ENCODE measurements at regions of chr19 and their contacts with region 1.

Region 1: DNA sequence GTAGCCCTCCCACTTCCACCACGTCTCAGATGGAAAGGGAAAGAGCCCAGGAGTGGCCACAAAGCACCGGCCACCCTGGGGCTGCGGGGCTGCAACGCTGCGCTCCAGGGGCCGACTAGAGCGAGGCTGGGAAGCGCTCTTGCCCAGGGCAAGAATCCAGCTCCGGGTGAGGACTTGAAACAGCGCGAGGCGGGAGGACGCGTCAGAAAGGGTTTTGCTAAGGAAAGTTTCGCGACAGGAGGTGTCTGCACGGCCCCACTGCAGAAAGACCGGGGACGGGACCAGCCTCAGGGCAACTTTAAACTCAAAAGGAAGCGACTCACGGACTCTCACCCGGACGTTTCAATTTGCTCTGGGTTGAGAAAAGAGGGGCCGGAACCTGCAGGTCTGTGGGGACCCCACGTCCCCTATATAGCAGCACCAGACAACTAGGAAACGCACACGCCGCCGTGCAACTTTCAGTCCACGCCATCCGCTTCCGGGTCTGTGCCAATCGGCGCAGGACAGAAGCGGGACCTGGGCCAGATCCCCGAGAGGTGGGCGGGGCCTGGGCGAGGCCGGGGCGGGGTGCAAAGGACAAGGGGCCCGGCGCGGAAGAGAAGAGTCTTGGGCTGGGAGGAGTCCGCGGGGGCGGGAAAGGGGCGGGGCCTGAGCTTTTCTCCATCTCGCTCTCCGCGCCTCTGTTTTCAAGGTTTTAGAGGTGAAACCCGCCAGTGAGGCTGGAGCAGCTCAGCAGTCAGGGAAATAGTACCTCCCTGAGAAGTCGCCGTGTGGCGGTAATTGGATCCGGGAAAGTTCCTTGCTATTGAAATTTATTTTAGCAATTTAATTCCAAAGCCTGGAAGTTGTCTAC is at the start of gene ZNF816:
- DNase-seq: peak; percentile 100
- H3K4me3 Mint-ChIP-seq: peak within 1 kb of the TSS; percentile 97
- H3K27ac Mint-ChIP-seq: peak within 1 kb of the TSS; percentile 95
- H3K4me1 Mint-ChIP-seq: peaks cover 15% of the 10 kb centered on the region
- H3K27me3 Mint-ChIP-seq: no peaks in the 10 kb centered on the region
- total RNA-seq, gene ZNF816: 8.9 TPM in 2 replicates

Region 2: DNA sequence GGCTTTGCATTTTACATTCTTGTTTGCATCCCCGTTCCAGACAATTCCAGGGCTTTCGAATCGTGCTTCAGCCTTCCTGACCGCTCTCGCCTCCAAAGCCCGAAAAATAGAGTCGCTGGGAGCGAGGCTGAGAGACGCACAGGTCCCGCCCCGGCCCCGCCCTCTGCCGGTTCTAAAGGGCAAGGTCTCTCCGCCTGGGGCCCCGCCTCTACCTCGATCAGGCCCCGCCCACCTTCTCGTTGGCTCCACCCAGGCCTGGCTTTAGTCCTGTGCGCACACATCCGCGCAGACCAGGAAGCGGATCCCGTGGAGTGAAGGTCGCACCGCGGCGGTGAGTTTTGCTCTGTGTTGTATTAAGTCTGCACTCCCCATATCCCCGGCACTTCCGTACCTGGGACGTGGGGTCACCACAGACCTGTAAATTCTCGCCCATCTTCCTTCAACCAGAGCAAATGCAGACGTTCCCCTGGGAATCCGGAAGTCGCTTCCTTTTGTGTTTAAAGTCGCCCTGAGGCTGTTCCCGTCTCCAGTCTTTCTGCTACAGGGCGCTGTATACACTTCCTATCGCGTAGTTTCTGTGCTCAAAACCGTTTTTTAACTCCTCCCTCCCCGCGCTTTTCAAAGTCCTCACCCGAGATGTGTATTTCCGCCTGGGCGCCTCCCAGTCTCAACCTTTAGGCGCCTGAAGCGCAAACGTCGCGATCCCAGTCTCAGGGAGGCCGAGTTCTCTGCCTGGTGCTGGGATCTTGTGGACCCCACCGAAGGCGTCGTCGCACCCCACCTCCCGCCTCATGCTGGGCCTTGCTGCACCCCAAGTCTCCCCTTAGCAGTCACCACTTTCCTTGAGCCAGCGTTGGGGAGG is 392.4 kb before region 1 on chr19 and contains the start of gene ZNF701:
- intact Hi-C with region 1: loop called (anchors 2 kb)
- DNase-seq: peak; percentile 99
- H3K4me3 Mint-ChIP-seq: peak within 1 kb of the TSS; percentile 88
- H3K27ac Mint-ChIP-seq: peak within 1 kb of the TSS; percentile 89
- H3K4me1 Mint-ChIP-seq: peaks cover 23% of the 10 kb centered on the region
- H3K27me3 Mint-ChIP-seq: no peaks in the 10 kb centered on the region
- total RNA-seq, gene ZNF701: 19.3 and 21.0 TPM in 2 replicates

Region 3: GRCh38 chr19:52786457-52787359 is 175.9 kb before region 1 on chr19 and contains the start of gene ZNF600:
- intact Hi-C with region 1: loop called (anchors 2 kb)
- DNase-seq: peak; percentile 90
- H3K4me3 Mint-ChIP-seq: peak within 1 kb of the TSS; percentile 92
- H3K27ac Mint-ChIP-seq: peak within 1 kb of the TSS; percentile 79
- H3K4me1 Mint-ChIP-seq: peaks cover 26% of the 10 kb centered on the region
- H3K27me3 Mint-ChIP-seq: no peaks in the 10 kb centered on the region
- total RNA-seq, gene ZNF600: 10.6 and 10.7 TPM in 2 replicates

Region 4: GRCh38 chr19:52853880-52854279 is 108.7 kb before region 1 on chr19:
- intact Hi-C with region 1: loop called (anchors 1 kb)
- DNase-seq: no peak
- H3K4me3 Mint-ChIP-seq: no peak overlapping the region
- H3K27ac Mint-ChIP-seq: no peak overlapping the region
- H3K4me1 Mint-ChIP-seq: peaks cover 16% of the 10 kb centered on the region
- H3K27me3 Mint-ChIP-seq: no peaks in the 10 kb centered on the region

Region 5: DNA sequence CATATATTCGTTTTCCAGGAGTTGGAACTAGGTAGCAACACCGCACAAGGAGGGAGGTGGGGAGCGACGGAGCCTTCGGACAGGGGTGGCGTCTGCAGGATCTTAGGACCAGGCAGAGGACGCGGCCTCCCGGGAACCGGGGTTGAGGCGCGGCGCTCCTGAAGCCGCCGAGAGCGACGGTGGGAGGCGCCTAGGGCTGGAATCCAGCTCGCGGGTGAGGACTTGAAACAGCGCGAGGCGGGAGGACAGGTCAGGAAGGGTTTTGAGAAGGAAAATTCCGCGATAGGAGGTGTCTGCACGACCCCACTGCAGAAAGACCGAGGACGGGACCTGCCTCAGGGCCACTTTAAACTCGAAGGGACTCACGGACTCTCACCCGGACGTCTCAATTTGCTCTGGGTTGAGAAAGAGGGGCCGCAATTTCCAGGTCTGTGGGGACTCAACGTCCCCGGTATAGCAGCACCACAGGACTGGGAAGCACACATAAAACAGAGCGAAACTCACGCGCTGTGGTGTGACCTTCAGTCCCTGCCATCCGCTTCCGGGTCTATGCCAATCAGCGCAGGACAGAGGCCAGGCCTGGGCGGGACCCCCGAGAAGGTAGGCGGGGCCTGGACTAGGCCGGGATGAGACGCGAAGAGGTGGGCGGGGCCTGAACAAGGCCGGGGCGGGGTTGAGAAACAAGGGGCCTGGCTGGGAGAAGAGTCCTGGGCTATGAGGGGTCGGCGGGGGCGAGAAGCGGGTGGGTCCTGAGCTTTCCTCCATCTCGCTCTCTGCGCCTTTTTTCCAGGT is 65.3 kb before region 1 on chr19 and contains the start of gene ZNF320:
- intact Hi-C with region 1: loop called (anchors 1 kb)
- DNase-seq: peak; percentile 98
- H3K4me3 Mint-ChIP-seq: peak within 1 kb of the TSS; percentile 92
- H3K27ac Mint-ChIP-seq: peak within 1 kb of the TSS; percentile 93
- H3K4me1 Mint-ChIP-seq: peaks cover 7% of the 10 kb centered on the region
- H3K27me3 Mint-ChIP-seq: no peaks in the 10 kb centered on the region
- total RNA-seq, gene ZNF320: 8.0 and 17.8 TPM in 2 replicates

Region 6: DNA sequence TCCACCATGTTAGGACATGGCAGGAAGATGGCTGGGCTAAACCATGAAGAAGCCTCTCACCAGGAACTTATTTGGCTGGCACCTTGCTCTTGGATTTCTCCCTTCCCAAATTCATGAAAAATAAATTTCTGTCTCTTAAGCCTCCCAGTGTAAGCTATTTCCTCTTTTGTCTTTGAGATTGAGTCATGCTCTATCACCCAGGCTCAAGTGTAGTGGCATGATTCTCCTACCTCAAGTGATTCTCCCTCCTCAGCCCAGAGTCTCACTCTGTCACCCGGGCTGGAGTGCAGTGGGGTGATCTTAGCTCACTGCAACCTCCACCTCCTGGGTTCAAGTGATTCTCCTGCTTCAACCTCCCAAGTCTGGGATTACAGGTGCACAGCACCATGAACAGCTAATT is 52.0 kb before region 1 on chr19:
- intact Hi-C with region 1: no loop called
- DNase-seq: no peak
- H3K4me3 Mint-ChIP-seq: no peak overlapping the region
- H3K27ac Mint-ChIP-seq: no peak overlapping the region
- H3K4me1 Mint-ChIP-seq: no peaks in the 10 kb centered on the region
- H3K27me3 Mint-ChIP-seq: no peaks in the 10 kb centered on the region

Region 7: GRCh38 chr19:52942386-52943133 is 20.1 kb before region 1 on chr19:
- intact Hi-C with region 1: loop called (anchors 1 kb)
- DNase-seq: peak; percentile 99
- H3K4me3 Mint-ChIP-seq: peak overlapping the region; percentile 90
- H3K27ac Mint-ChIP-seq: peak overlapping the region; percentile 88
- H3K4me1 Mint-ChIP-seq: peaks cover 19% of the 10 kb centered on the region
- H3K27me3 Mint-ChIP-seq: no peaks in the 10 kb centered on the region

Region 8: DNA sequence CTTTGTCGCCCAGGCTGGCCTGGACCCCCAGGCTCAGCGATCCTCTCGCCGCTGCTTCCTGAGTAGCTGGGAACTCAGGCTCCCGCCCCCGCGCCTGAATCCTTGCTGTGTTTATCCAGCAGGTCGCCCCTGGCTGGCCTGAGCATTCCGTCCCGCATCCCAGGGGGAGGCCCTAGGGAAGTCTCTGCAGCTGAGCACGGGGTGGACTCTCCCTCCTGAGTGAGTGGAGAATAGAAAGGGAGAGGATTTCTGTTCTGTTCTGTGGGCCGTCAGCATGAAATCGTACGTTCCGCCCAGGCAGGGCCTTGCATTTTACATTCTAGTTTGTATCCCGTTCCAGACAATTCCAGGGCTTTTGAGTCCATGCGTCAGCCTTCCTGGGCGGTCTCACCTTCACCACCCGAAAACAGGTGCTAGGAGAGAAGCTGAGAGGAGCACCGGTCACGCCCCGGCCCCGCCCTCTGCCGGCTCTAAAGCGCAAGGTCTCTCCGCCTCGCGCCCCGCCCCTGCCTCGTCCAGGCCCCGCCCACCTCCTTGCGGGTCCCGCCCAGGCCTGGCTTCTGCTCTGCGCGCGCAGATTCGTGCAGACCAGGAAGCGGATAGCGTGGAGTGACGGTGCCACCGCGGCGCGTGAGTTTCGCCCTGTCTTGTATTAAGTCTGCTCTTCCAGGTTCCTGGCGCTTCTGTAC is 468.9 kb after region 1 on chr19 and contains the start of gene ZNF761:
- intact Hi-C with region 1: loop called (anchors 2 kb)
- DNase-seq: peak; percentile 99
- H3K4me3 Mint-ChIP-seq: peak within 1 kb of the TSS; percentile 90
- H3K27ac Mint-ChIP-seq: peak within 1 kb of the TSS; percentile 93
- H3K4me1 Mint-ChIP-seq: peaks cover 16% of the 10 kb centered on the region
- H3K27me3 Mint-ChIP-seq: no peaks in the 10 kb centered on the region
- total RNA-seq, gene ZNF761: 9.8 and 11.6 TPM in 2 replicates